H1 (cell line): ENCODE measurements at regions of chr9 and their contacts with region 1.

Region 1: GRCh38 chr9:91758491-91758981 is 191.5 kb downstream of the ROR2 start:
- DNase-seq: peak; percentile 34 to 93
- H3K4me3 ChIP-seq: no peak overlapping the region
- H3K27ac ChIP-seq: no peak overlapping the region
- H3K4me1 ChIP-seq: 0 out of 7 replicates have a peak, but pooled peaks cover 0 to 2% (median 0%) of the 10 kb centered on the region in 4 experiments
- H3K27me3 ChIP-seq: no peaks in the 10 kb centered on the region
- CTCF ChIP-seq: peak; percentile 85 to 87 (median 86)
- EP300 ChIP-seq: no peak
- POLR2A ChIP-seq: no peak
- RAD21 ChIP-seq: peak; percentile 78 to 86

Region 2: DNA sequence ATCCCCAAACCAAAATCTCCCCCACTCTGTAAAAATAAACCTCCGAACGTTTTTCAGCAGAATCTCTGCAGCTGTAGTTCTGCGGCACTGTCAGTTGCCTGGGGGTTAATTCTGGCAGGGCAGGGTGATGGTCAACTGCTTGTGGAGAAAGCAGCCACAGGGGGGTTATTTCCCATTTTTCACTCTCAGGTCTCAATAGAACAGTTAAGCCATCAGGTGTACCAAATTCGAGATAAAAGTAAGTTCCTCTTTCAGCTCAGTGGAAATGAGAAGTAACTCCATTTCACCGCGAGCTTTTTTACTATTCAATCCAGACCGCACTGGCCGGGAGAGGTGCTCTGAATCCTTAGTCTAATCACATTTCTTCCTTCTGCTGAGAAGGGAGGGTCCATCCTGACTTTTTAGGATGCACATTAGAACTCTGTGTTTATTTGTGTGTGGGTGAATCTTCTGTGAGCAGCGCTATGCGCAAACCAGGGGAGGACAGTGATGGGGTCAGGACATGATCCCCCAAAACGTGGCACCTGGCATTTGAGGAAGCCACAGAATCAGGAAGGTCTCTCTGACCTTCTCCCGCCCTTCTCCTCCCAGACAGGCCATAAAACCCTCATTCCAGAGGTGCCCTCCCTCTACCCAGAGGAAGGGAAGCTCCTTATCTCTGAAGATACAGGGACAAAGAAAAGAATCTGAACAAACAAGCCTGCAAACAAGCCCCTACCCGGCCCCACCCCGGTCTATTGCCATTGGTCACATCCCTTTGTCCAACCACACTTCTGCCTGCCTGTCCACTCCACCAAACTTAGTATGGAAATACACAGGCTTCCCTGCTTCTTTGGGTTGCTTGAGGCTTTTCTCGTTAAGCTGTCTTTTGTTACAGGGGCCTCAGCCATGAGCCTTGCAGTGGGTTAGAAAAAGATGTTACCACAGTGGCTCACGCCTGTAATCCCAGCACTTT is 37.5 kb before region 1 on chr9:
- CTCF ChIA-PET with region 1: interaction called, 12 read pairs
- POLR2A ChIA-PET with region 1: no interaction called
- DNase-seq: no peak
- H3K4me3 ChIP-seq: no peak overlapping the region
- H3K27ac ChIP-seq: no peak overlapping the region
- H3K4me1 ChIP-seq: peaks cover 0 to 4% (median 0%) of the 10 kb centered on the region in 4 experiments; a peak in 1 of 7 replicates
- H3K27me3 ChIP-seq: no peaks in the 10 kb centered on the region
- CTCF ChIP-seq: no peak
- EP300 ChIP-seq: no peak
- POLR2A ChIP-seq: no peak
- RAD21 ChIP-seq: no peak

Region 3: GRCh38 chr9:91775011-91775707 is 16.6 kb after region 1 on chr9:
- CTCF ChIA-PET with region 1: interaction called, 96 read pairs
- POLR2A ChIA-PET with region 1: no interaction called
- DNase-seq: peak; percentile 36 to 87
- H3K4me3 ChIP-seq: no peak overlapping the region
- H3K27ac ChIP-seq: no peak overlapping the region
- H3K4me1 ChIP-seq: peaks cover 0 to 2% (median 0%) of the 10 kb centered on the region in 4 experiments; a peak in 1 of 7 replicates
- H3K27me3 ChIP-seq: no peaks in the 10 kb centered on the region
- CTCF ChIP-seq: peak; percentile 90 to 97 (median 96)
- EP300 ChIP-seq: no peak
- POLR2A ChIP-seq: no peak
- RAD21 ChIP-seq: peak; percentile 96 to 99

Region 4: DNA sequence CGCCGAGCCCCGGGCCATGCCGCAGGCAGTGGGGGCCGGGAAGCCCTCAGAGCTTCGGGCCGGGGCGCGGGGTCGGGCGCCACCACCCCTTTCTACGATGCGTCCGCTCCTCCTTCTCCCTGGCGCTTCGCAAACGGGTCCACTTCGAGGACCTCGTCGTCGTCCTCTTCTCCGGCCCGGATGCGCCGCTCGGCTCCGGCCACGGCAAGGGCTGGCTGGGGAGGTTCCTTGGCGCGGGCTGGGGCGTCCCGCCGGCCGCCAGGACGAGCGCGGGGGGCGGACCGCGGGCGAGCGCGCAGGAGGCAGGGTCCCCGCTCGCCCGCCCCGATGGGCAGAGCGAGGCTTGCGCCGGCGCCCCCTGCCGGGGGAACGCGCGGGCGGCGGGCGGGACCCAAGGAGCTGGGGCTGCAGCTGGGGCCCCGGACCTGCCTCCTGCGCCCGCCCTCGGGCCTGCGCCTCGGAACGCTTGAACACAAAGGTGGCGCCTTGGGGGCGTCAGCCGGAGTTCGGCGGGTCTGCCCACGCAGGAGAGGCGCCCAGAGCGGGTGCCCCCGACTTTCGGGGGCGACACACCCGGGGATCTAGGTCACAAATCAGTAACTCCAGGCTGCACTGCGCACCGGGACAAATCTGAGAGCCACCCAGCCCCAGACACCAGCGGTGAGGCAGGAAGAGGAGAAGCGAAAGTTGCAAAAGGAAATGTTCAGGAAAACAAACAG is 191.6 kb after region 1 on chr9 and contains the start of gene ROR2:
- CTCF ChIA-PET with region 1: interaction called, 77 read pairs
- POLR2A ChIA-PET with region 1: interaction called, 3 read pairs
- DNase-seq: peak in 1 of 2 experiments; percentile 94
- H3K4me3 ChIP-seq: peak within 1 kb of the TSS; percentile 48 to 78 (median 72)
- H3K27ac ChIP-seq: no peak within 1 kb of the TSS
- H3K4me1 ChIP-seq: peaks cover 2 to 9% (median 2%) of the 10 kb centered on the region in 4 experiments
- H3K27me3 ChIP-seq: peaks cover 7 to 66% (median 51%) of the 10 kb centered on the region in 4 experiments
- CTCF ChIP-seq: peak; percentile 67 to 84 (median 68)
- EP300 ChIP-seq: no peak
- POLR2A ChIP-seq: no peak
- RAD21 ChIP-seq: peak; percentile 33 to 77
- total RNA-seq, gene ROR2: 4.0 and 4.3 TPM in 2 replicates

Region 5: DNA sequence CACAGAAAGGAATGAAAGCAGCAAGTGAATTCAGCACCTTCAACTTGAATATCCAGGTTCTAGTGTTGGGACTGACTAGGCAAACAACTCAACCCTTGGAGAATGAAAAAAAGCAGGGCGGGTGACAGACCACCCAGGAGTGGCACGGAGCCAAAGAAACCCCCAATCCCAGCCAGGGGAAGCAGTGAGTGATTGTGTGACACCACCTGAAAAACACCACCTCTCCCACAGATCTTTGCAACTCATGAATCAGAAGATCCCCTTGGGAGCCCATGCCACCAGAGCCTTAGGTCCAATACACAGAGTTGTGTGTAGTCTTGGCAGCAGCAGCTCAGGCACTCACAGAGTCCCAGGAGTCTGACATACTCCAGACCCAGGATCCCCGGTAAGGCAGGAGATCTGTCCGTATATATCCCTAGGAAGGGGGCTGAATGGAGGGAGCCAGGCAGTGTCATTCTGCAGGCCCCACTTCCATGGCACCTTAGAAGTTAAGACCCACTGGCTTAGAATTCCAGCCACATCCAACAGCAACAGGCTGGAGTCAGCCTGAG is 213.6 kb after region 1 on chr9:
- CTCF ChIA-PET with region 1: interaction called, 26 read pairs
- POLR2A ChIA-PET with region 1: no interaction called
- DNase-seq: no peak
- H3K4me3 ChIP-seq: no peak overlapping the region
- H3K27ac ChIP-seq: no peak overlapping the region
- H3K4me1 ChIP-seq: no peaks in the 10 kb centered on the region
- H3K27me3 ChIP-seq: no peaks in the 10 kb centered on the region
- CTCF ChIP-seq: no peak
- EP300 ChIP-seq: no peak
- POLR2A ChIP-seq: no peak
- RAD21 ChIP-seq: no peak

Region 6: GRCh38 chr9:92001244-92001643 is 242.7 kb after region 1 on chr9:
- CTCF ChIA-PET with region 1: interaction called, 16 read pairs
- POLR2A ChIA-PET with region 1: no interaction called
- DNase-seq: peak in 1 of 2 experiments; percentile 8
- H3K4me3 ChIP-seq: no peak overlapping the region
- H3K27ac ChIP-seq: no peak overlapping the region
- H3K4me1 ChIP-seq: no peaks in the 10 kb centered on the region
- H3K27me3 ChIP-seq: no peaks in the 10 kb centered on the region
- CTCF ChIP-seq: no peak
- EP300 ChIP-seq: no peak
- POLR2A ChIP-seq: no peak
- RAD21 ChIP-seq: no peak